ENCODE measurements at regions of chr14 and their contacts with region 1.

Region 1: DNA sequence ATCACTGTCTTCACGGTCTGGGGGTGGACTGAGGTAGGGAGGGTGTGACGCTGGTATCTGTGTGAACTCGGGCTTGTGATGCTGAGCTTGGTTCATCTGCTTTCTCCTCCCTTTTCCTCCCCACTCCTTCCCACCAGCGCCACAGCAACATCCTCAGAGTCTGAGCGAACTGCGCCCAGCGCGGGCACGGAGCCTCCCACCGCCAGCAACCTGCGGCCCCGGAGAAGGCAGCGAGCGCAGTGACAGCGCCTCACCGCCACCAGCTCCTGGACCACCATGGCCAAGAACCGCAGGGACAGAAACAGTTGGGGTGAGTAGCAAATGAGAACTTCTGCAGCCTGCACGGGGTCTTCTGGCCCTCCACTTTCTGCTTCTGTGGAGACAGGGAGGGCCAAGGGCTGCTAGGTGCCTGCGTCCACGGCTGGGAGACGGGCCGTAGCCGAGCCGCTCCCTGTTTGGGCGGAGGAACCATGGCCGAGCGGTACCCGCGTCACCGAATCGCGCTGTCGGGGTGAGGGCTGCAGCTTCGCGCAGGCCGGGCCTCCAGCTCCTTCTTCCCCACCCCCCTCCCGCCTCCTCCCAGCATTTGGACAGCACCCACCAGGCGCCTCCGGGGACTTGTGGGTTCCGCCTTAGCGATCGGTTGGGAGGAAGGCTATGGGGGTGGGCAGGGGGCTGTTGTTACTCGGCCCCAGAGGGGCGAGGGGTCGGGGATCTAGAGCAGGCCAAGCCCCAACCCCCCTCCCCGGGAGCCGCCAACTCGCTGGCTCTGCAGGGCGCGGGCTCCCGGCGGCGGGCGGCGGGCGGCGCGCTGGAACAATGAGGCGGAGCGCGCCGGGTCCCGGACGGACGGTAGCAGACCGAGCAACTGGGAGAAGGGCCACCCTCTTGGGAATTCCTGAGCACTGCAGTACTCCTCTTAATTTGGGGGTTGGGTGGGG is at the start of gene ATL1:
- DNase-seq: peak; percentile 58 to 77
- H3K4me3 ChIP-seq: peak within 1 kb of the TSS; percentile 67 to 82 (median 75)
- H3K27ac ChIP-seq: peak within 1 kb of the TSS; percentile 85 to 88
- H3K4me1 ChIP-seq: no peaks in the 10 kb centered on the region
- H3K27me3 ChIP-seq: no peaks in the 10 kb centered on the region
- CTCF ChIP-seq: no peak
- POLR2A ChIP-seq: peak; percentile 34
- total RNA-seq, gene ATL1: 10.4 to 23.7 (median 22.0) TPM

Region 2: GRCh38 chr14:50590464-50590863 is 30.2 kb after region 1 on chr14:
- intact Hi-C with region 1: loop called (anchors 2 kb)
- DNase-seq: no peak
- H3K4me3 ChIP-seq: no peak overlapping the region
- H3K27ac ChIP-seq: no peak overlapping the region
- H3K4me1 ChIP-seq: no peaks in the 10 kb centered on the region
- H3K27me3 ChIP-seq: no peaks in the 10 kb centered on the region
- CTCF ChIP-seq: no peak
- POLR2A ChIP-seq: no peak